Posterior vena cava (tissue), 2 donors: ENCODE measurements at regions of chr12 and their contacts with region 1.

Region 1: DNA sequence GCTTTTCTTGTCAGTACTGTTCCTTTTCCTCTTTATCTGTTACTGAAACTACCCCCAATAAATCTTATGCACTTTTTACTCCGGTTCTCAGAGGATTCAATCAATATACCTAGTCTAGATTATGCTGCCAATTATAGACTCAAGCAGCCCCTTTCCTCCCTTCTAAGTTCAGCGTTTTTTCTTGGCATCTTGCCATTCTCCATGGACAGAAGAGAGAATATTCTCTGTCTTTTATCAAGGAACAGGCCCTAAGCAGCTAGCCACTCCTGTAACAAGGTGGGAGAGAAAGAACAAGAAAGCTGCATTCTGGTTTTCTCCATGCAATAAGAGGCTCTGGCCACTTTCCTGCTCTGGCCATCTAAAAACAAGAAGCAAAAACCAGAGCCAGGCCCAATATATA is 263.0 kb upstream of the ALG10 start:
- DNase-seq: no peak

Region 2: DNA sequence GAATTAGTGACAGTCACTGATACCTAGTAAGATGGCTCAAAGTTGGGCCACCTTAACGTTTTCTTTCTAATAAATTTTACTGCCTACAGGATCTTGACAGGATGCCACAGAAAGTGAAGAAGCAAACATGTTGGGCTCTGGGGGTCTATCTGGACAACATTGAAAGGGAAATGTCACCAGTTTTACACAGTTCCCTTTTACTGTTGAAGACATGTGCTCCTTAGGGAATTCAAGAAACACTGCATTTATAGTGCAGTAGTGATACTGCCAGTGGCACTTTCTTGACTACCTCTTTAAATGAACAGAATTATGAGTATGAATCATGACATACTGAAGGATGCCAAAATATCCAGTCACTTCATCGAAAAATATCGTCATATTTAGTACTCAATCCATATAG is 50.3 kb before region 1 on chr12:
- intact Hi-C with region 1: no loop called
- DNase-seq: no peak

Region 3: DNA sequence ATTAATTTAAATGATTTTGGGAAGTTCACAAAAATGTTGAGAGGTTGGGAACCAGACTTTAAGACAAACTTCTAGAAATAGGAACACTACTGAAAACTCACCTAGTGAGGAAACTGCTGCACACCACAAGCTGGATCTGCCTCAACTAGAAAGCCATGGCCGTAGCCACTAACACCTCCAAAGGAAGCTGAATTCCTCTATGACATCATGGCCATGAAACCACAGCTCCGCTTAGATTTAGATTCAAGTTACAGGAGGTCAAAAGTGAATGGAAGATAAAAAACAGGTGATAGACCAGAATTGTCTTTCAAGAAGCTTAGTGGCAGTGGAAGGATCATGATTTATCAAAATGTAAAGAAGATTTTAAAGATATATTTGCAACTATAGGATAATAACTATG is 54.3 kb after region 1 on chr12:
- intact Hi-C with region 1: loop called in 1 of 2 experiments (anchors 2 kb)
- DNase-seq: no peak